Colonic mucosa (tissue), 4 donors: ENCODE measurements at regions of chr2 and their contacts with region 1.

Region 1: DNA sequence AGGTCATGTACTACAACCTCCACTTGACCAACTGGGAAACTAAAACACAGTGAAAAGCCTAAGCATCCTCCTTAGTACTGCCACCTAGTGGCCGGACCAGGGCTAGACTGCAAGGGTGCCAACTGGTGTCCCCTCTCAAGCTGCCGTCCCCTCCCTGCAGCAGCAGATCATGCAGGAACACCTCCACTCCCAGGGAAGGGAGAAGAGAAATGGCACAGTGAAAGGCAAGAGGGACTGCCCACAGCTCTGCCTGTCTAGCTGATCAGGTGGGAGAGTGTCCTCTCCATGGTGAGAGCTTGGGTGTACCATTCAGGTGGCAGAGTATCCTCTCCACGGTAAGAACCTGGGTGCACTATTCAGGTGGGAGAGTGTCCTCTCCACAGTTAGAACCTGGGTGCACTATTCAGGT is 78.1 kb downstream of the AAK1 start:
- DNase-seq: peak; percentile 75
- H3K4me3 ChIP-seq: no peak overlapping the region
- H3K27ac ChIP-seq: no peak overlapping the region
- H3K4me1 ChIP-seq: peaks cover under 1% of the 10 kb centered on the region
- H3K27me3 ChIP-seq: no peaks in the 10 kb centered on the region
- CTCF ChIP-seq: peak; percentile 47

Region 2: GRCh38 chr2:69643602-69644505 is 78.4 kb after region 1 on chr2 and contains the start of gene AAK1:
- intact Hi-C with region 1: loop called (anchors 5 kb)
- DNase-seq: peak; percentile 94
- H3K4me3 ChIP-seq: peak within 1 kb of the TSS; percentile 85
- H3K27ac ChIP-seq: peak within 1 kb of the TSS; percentile 95
- H3K4me1 ChIP-seq: no peaks in the 10 kb centered on the region
- H3K27me3 ChIP-seq: no peaks in the 10 kb centered on the region
- CTCF ChIP-seq: no peak
- total RNA-seq, gene AAK1: 33.5 to 41.7 TPM

Region 3: GRCh38 chr2:69816923-69817542 is 251.6 kb after region 1 on chr2:
- intact Hi-C with region 1: loop called (anchors 10 kb)
- DNase-seq: peak; percentile 86
- H3K4me3 ChIP-seq: no peak overlapping the region
- H3K27ac ChIP-seq: no peak overlapping the region
- H3K4me1 ChIP-seq: no peaks in the 10 kb centered on the region
- H3K27me3 ChIP-seq: no peaks in the 10 kb centered on the region
- CTCF ChIP-seq: peak; percentile 96